ENCODE measurements at regions of chr9 and their contacts with region 1.

Region 1: GRCh38 chr9:96232539-96233241 is 69.3 kb downstream of the HSD17B3 start:
- DNase-seq: peak; percentile 24
- H3K4me3 ChIP-seq: no peak overlapping the region
- H3K27ac ChIP-seq: no peak overlapping the region
- H3K4me1 ChIP-seq: no peaks in the 10 kb centered on the region
- H3K27me3 ChIP-seq: peaks cover 7% of the 10 kb centered on the region in 2 experiments
- CTCF ChIP-seq: peak; percentile 84 to 87
- POLR2A ChIP-seq: no peak

Region 2: GRCh38 chr9:96245399-96245798 is 12.7 kb after region 1 on chr9:
- CTCF ChIA-PET with region 1: interaction called, 32 read pairs
- POLR2A ChIA-PET with region 1: no interaction called
- dilution Hi-C with region 1: no loop called
- intact Hi-C with region 1: no loop called
- DNase-seq: no peak
- H3K4me3 ChIP-seq: no peak overlapping the region
- H3K27ac ChIP-seq: no peak overlapping the region
- H3K4me1 ChIP-seq: no peaks in the 10 kb centered on the region
- H3K27me3 ChIP-seq: peaks cover 2 to 3% of the 10 kb centered on the region in 2 experiments
- CTCF ChIP-seq: peak in 1 of 2 donors; percentile 11
- POLR2A ChIP-seq: no peak

Region 3: GRCh38 chr9:96317335-96317980 is 84.8 kb after region 1 on chr9:
- CTCF ChIA-PET with region 1: interaction called, 105 read pairs
- POLR2A ChIA-PET with region 1: no interaction called
- dilution Hi-C with region 1: no loop called
- intact Hi-C with region 1: loop called (anchors 1 kb)
- DNase-seq: peak; percentile 57
- H3K4me3 ChIP-seq: no peak overlapping the region
- H3K27ac ChIP-seq: no peak overlapping the region
- H3K4me1 ChIP-seq: no peaks in the 10 kb centered on the region
- H3K27me3 ChIP-seq: no peaks in the 10 kb centered on the region
- CTCF ChIP-seq: peak; percentile 69 to 85
- POLR2A ChIP-seq: no peak

Measured in endothelial cell of umbilical vein (primary cell).